WTC11 (cell line): ENCODE measurements at regions of chr6 and their contacts with region 1.

Region 1: DNA sequence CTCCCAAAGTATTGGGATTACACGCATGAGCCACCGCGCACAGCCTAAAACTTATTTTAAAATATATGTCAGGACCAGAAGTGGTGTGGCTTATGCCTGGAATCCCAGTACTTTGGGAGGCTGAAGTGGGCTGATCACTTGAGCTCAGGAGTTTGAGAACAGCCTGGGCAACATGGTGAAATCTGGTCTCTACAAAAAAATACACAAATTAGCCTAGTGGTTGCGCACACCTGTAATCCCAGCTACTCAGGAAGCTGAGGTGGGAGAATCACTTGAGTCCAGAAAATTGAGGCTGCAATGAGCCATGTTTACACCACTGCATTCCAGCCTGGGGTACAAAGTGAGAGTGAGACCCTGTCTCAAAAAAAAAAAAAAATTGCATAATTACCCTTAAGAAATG is 13.7 kb downstream of the PXT1 start:
- DNase-seq: no peak
- ATAC-seq: peak; percentile 68
- H3K4me3 Mint-ChIP-seq: no peak overlapping the region
- H3K27ac Mint-ChIP-seq: no peak overlapping the region
- H3K4me1 Mint-ChIP-seq: peaks cover under 1% of the 10 kb centered on the region
- H3K27me3 Mint-ChIP-seq: no peaks in the 10 kb centered on the region
- CTCF ChIP-seq: peak; percentile 61

Region 2: DNA sequence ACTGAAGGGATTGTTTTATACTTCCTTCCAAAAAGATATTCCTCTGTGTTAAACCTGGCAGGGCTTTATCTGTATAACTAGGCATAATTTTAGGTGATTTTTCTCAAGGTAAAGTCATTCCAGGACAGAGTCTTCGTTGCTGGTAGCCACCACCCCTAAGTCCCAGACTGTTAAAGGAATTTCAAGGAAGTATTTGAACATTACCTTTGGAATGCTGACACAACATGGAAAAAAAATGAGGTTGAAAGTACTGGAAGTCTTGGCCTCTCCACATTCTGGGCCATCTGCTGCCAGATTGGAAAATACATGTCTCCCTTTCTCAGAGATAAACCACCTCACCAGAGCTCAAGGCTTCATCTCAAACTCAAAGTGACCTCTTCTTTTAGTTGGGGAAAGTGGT is 14.4 kb before region 1 on chr6:
- CTCF ChIA-PET with region 1: interaction called, 14 read pairs
- POLR2A ChIA-PET with region 1: no interaction called
- DNase-seq: no peak
- ATAC-seq: no peak
- H3K4me3 Mint-ChIP-seq: no peak overlapping the region
- H3K27ac Mint-ChIP-seq: no peak overlapping the region
- H3K4me1 Mint-ChIP-seq: no peaks in the 10 kb centered on the region
- H3K27me3 Mint-ChIP-seq: peaks cover 3% of the 10 kb centered on the region
- CTCF ChIP-seq: no peak

Region 3: GRCh38 chr6:36442671-36443470 is 14.0 kb after region 1 on chr6 and contains the starts of genes KCTD20 and PXT1:
- CTCF ChIA-PET with region 1: interaction called, 20 read pairs
- POLR2A ChIA-PET with region 1: no interaction called
- DNase-seq: peak; percentile 73
- ATAC-seq: peak; percentile 58
- H3K4me3 Mint-ChIP-seq: peak within 1 kb of the TSS; percentile 92
- H3K27ac Mint-ChIP-seq: peak within 1 kb of the TSS; percentile 84
- H3K4me1 Mint-ChIP-seq: peaks cover 31% of the 10 kb centered on the region
- H3K27me3 Mint-ChIP-seq: no peaks in the 10 kb centered on the region
- CTCF ChIP-seq: no peak
- total RNA-seq, gene KCTD20: 25.1 to 27.5 TPM (median 26.7 TPM) in 3 replicates
- total RNA-seq, gene PXT1: 0.15 TPM in 1 of 3 replicates, not detected in the others

Region 4: DNA sequence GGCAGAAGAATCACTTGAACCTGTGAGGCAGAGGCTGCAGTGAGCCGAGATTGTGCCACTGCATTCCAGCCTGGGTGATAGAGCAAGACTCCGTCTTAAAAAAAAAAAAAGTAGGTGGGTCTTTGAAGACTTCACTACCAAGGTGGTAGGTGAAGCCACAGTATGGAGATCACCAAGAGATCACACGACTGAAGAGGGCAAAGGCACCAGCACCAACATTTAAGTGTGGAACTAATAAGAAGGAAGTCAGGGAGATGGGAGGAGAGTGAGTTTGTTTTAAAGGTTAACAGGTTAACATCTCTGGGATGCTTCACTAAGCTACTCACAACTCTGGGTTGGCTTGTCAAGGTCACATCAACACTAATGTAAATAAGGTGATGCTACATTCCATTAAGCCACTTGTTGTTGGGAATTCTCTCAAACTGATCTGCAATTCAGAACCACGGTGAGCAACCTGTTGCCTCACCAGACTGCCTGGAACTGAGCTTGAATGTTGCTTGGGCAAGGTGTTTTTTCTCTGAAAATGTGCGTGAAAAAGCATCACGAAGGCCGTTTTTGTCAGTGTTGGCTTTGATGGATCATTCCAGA is 62.6 kb after region 1 on chr6:
- CTCF ChIA-PET with region 1: interaction called, 10 read pairs
- POLR2A ChIA-PET with region 1: no interaction called
- DNase-seq: no peak
- ATAC-seq: peak; percentile 66
- H3K4me3 Mint-ChIP-seq: no peak overlapping the region
- H3K27ac Mint-ChIP-seq: peak overlapping the region; percentile 69
- H3K4me1 Mint-ChIP-seq: peaks cover 32% of the 10 kb centered on the region
- H3K27me3 Mint-ChIP-seq: no peaks in the 10 kb centered on the region
- CTCF ChIP-seq: no peak

Region 5: DNA sequence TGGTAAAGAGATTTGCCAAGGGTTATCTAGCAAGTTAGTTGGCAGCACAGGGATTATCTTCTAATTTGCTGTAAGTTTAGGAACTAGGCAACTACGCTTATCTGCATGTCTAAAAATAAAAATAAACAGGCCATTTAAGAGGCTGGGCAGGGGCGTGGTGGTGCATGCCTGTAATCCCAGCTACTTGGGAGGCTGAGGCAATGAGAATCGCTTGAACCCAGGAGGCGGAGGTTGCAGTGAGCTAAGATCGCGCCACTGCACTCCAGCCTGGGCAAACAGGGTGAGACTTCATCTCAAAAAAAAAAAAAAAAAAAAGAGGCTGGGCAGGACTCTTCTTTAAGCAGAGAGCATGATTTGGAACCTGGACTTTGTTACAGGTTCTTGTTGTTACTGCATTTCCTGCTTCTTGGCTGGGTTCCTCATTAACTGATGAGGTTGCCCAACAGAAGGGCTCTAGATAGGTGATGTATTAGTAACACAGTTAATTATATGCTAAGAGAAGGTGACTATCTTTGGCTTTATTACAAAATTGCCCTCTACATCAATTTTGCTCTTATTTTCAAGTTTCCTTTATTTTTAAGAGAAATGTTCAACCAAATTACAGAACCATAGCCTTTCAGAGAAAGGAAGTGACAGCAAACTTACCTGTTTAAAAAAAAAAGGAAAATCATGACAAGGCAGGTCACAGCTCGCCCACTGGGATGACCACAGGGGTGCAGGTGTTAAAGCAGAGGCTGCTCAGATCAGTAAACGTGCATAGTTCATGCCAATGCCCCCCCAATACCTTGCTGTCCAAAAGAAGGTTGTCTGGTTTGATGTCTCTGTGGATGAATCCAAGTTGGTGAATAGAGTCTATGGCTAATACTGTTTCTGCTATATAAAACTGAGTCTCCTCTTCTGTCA is 85.9 kb after region 1 on chr6:
- CTCF ChIA-PET with region 1: no interaction called
- POLR2A ChIA-PET with region 1: no interaction called
- DNase-seq: no peak
- ATAC-seq: no peak
- H3K4me3 Mint-ChIP-seq: no peak overlapping the region
- H3K27ac Mint-ChIP-seq: no peak overlapping the region
- H3K4me1 Mint-ChIP-seq: no peaks in the 10 kb centered on the region
- H3K27me3 Mint-ChIP-seq: no peaks in the 10 kb centered on the region
- CTCF ChIP-seq: no peak